H1 (cell line): ENCODE measurements at regions of chr9 and their contacts with region 1.

Region 1: DNA sequence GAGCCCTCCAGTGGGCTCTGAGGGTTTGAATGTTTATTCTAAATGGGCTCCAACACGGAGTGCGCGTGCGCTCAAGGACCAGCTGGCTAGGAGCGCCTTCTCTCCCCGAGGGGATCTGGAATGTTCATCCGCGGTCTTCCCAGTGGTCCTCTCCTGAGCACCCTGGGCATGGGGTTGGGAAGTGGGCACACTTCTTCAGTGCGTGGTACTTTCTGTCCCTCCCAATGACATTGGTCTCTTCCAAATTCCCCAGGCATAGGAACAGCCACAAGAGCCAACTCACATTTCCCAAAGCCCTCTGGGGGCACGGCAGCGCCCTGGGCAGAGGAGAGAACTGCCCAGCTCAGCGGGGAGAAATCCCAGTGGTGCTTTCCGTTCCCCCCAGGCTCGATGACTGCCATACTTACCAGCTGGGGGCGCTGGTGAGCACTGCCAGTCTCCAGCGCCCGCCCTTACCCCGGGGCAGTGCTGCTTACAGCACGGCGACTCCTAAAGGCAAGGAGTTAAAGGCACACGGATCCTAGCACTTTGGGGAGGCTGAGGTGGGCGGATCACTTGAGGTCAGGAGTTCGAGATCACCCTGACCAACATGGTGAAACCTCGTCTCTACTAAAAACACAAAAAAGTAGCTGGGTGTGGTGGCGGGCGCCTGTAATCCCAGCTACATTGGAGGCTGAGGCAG is 29.9 kb upstream of the OBP2B start:
- DNase-seq: peak; percentile 86 to 91
- H3K4me3 ChIP-seq: peak overlapping the region; percentile 29 to 62 (median 49); a peak in 7 of 8 replicates
- H3K27ac ChIP-seq: peak overlapping the region; percentile 63; the same call in 1 of the 2 replicates
- H3K4me1 ChIP-seq: peaks cover 0 to 2% (median under 1%) of the 10 kb centered on the region in 4 experiments; a peak in 2 of 7 replicates
- H3K27me3 ChIP-seq: peaks cover 0 to 12% (median 6%) of the 10 kb centered on the region in 4 experiments; a peak in 3 of 7 replicates
- CTCF ChIP-seq: peak; percentile 85 to 99 (median 97)
- EP300 ChIP-seq: 0 out of 3 replicates have a peak, but pooled peaks of 1 of the 2 experiments have one; percentile 39
- POLR2A ChIP-seq: no peak
- RAD21 ChIP-seq: peak; percentile 58 to 78

Region 2: DNA sequence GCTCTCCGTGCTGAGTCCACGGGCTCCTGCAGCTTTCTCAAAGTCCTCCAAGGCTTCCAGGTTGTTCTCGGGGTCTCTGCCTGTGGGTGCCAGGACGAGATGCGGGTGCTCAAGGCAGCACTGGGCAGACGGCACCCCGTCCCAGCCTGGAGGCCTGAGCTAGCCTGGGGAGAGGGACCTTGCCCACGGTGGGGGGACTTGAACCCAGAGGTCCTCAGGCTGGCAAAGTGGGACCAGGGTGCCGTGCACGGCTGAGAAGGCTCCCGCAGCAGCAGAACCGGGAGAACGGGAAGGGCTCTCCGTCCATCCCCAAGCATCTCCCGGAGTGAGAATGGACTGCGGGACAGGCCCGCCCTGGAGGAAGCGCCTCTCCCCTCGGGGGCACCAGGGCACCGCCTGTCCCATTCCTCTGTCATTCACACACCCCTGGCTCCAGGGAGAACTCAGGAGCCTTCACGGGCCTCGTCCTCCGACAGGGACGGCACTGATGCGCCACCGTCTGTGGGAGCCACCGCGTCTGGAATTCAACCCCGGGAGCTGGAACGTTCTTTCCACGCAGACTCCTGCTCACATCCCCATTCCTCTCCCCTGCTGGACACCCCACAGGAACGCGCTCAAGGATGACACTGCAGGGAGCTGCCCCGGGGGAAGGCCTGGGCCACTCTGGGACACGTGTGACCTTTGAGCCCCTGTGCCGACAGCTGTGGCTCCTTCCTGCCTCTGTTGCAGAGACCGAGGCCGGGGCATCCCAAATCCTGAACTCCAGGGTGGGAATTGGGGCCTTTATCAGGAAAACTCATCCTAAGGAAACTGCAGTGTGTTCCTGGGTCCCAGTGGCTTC is 13.6 kb before region 1 on chr9:
- CTCF ChIA-PET with region 1: interaction called, 12 read pairs
- POLR2A ChIA-PET with region 1: no interaction called
- DNase-seq: peak in 1 of 2 experiments; percentile 37
- H3K4me3 ChIP-seq: no peak overlapping the region
- H3K27ac ChIP-seq: no peak overlapping the region
- H3K4me1 ChIP-seq: no peaks in the 10 kb centered on the region
- H3K27me3 ChIP-seq: no peaks in the 10 kb centered on the region
- CTCF ChIP-seq: no peak
- EP300 ChIP-seq: no peak
- POLR2A ChIP-seq: no peak
- RAD21 ChIP-seq: no peak

Region 3: DNA sequence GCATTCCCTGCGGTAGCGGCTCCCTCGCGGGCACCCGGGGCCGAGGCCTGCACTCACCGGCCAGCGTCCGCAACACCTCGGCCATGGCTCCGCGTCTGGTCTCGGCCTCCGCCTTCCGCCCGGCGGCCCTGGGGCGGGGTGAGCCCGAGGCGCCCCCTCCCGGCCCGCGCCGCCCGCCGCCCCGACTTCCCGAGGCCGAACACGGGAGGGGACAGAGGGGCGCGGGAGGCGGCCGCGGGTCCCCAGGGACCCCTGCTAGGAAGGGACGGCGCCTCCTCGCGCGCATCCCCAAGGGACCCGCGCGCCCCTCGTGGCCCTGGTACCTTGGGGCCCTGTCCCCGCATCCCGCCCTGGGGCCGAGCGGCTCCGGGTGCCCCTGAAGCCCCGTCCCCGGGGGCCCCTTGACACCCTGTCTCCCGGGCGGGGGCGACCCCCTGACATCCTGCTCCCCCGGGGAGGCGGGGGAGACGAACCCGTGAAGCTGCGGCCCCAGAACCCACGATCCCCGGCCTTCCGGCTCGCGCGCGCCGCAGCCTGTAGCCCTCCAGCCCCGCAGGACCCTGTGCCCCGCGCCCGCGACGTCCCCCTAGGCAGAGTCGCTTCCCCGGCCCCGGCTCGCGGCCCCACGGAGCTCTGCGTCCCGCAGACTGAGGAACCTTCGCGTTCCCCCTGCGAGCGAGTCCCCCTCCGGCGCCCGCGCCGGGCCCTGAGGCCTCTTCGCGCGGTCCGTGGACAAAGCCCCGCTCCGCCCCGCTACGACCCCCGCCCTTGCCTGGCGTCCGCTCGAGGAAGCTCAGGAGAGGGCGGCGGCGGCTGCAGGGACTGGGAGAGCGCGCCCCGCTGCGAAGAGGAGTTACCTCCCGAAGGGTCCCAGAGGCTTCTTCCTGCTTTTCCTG is 36.4 kb after region 1 on chr9 and contains the start of gene ABO:
- CTCF ChIA-PET with region 1: interaction called, 11 read pairs
- POLR2A ChIA-PET with region 1: no interaction called
- DNase-seq: peak in 1 of 2 experiments; percentile 62
- H3K4me3 ChIP-seq: peak within 1 kb of the TSS; percentile 36 to 68 (median 37)
- H3K27ac ChIP-seq: no peak within 1 kb of the TSS
- H3K4me1 ChIP-seq: no peaks in the 10 kb centered on the region; a peak in 1 of 7 replicates
- H3K27me3 ChIP-seq: peaks cover 34 to 55% (median 47%) of the 10 kb centered on the region in 4 experiments
- CTCF ChIP-seq: peak in 1 of 3 experiments; percentile 23; a peak in 2 of 4 replicates
- EP300 ChIP-seq: no peak
- POLR2A ChIP-seq: no peak
- RAD21 ChIP-seq: peak in 1 of 2 experiments; percentile 26; a peak in 1 of 4 replicates
- total RNA-seq, gene ABO: not detected in 2 replicates

Region 4: GRCh38 chr9:133327834-133328484 is 89.0 kb after region 1 on chr9:
- CTCF ChIA-PET with region 1: interaction called, 25 read pairs
- POLR2A ChIA-PET with region 1: no interaction called
- DNase-seq: no peak
- H3K4me3 ChIP-seq: no peak overlapping the region
- H3K27ac ChIP-seq: no peak overlapping the region
- H3K4me1 ChIP-seq: no peaks in the 10 kb centered on the region
- H3K27me3 ChIP-seq: no peaks in the 10 kb centered on the region
- CTCF ChIP-seq: no peak
- EP300 ChIP-seq: no peak
- POLR2A ChIP-seq: peak in 1 of 2 experiments; percentile 48; a peak in 1 of 3 replicates
- RAD21 ChIP-seq: no peak

Region 5: GRCh38 chr9:133347985-133348717 is 109.2 kb after region 1 on chr9 and contains the starts of genes MED22 and RPL7A:
- CTCF ChIA-PET with region 1: interaction called, 3 read pairs
- POLR2A ChIA-PET with region 1: interaction called, 14 read pairs
- DNase-seq: peak; percentile 77 to 93
- H3K4me3 ChIP-seq: peak within 1 kb of the TSS; percentile 93 to 100 (median 96)
- H3K27ac ChIP-seq: peak within 1 kb of the TSS; percentile 99
- H3K4me1 ChIP-seq: peaks cover 0 to 10% (median 7%) of the 10 kb centered on the region in 4 experiments; a peak in 6 of 7 replicates
- H3K27me3 ChIP-seq: no peaks in the 10 kb centered on the region
- CTCF ChIP-seq: no peak
- EP300 ChIP-seq: no peak
- POLR2A ChIP-seq: peak in 1 of 2 experiments; percentile 97; a peak in 1 of 3 replicates
- RAD21 ChIP-seq: no peak
- total RNA-seq, gene MED22: 56.4 and 61.8 TPM in 2 replicates
- total RNA-seq, gene RPL7A: 2,578 and 2,633 TPM in 2 replicates

Region 6: DNA sequence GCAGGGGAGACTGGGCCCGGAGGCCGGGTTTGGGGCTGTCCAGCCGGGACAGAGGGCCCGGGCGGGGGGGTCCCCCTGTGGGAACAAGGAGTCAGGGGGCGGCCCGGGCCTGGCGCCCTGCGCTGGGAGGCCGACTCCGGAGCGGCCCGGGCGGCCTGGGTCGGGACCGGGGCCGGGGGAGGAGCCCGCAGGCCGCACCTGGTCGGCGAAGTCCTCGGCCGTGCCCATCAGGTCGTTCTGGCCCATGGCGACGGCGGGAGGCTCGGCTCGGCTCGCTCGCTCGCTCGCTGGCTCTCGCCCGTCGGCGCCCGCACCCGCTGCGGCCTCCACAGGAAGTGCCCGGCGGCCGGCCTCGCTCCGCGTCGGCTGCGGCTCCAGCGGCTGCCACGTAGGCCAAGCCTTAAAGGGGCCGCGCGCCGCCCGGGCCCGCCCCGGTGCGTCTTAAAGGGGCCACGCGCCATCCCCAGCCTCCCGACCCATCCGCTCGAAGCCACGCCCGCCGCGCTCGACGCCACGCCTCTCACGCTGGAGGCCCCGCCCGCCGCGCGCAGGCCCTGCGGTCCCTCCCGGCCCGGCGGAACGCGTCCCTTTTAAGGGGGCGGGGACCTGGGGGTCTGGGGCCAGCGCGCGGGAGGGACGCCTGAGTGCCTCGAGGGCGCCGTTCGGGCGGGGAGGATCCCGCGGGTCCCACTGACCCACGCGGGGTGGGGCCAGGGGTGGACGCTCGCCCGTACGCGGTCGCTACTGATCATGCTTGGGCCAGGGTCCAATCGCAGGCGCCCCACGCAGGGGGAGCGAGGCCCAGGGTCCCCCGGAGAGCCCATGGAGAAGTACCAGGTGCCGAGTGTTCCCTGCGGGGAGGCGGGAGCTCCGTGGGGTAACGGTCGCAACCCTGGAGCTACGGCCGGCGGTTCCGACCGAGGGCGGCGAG is 137.0 kb after region 1 on chr9 and contains the starts of genes STKLD1 and SURF4:
- CTCF ChIA-PET with region 1: no interaction called
- POLR2A ChIA-PET with region 1: no interaction called
- DNase-seq: peak; percentile 81 to 99
- H3K4me3 ChIP-seq: peak within 1 kb of the TSS; percentile 70 to 87 (median 74)
- H3K27ac ChIP-seq: peak within 1 kb of the TSS; percentile 80
- H3K4me1 ChIP-seq: peaks cover 0 to 5% (median 0%) of the 10 kb centered on the region in 4 experiments; a peak in 1 of 7 replicates
- H3K27me3 ChIP-seq: peaks cover 0 to 11% (median 6%) of the 10 kb centered on the region in 4 experiments; a peak in 5 of 7 replicates
- CTCF ChIP-seq: no peak
- EP300 ChIP-seq: peak in 1 of 2 experiments; percentile 52; a peak in 1 of 3 replicates
- POLR2A ChIP-seq: peak in 1 of 2 experiments; percentile 82; a peak in 2 of 3 replicates
- RAD21 ChIP-seq: no peak
- total RNA-seq, gene STKLD1: not detected in 2 replicates
- total RNA-seq, gene SURF4: 167 and 182 TPM in 2 replicates